A673 (cell line): ENCODE measurements at regions of chr4 and their contacts with region 1.

Region 1: GRCh38 chr4:22045051-22045630 is 96.6 kb upstream of the KCNIP4 start:
- DNase-seq: no peak
- H3K4me3 ChIP-seq: no peak overlapping the region
- H3K27ac ChIP-seq: no peak overlapping the region
- H3K4me1 ChIP-seq: no peaks in the 10 kb centered on the region
- H3K27me3 ChIP-seq: no peaks in the 10 kb centered on the region
- CTCF ChIP-seq: no peak

Region 2: DNA sequence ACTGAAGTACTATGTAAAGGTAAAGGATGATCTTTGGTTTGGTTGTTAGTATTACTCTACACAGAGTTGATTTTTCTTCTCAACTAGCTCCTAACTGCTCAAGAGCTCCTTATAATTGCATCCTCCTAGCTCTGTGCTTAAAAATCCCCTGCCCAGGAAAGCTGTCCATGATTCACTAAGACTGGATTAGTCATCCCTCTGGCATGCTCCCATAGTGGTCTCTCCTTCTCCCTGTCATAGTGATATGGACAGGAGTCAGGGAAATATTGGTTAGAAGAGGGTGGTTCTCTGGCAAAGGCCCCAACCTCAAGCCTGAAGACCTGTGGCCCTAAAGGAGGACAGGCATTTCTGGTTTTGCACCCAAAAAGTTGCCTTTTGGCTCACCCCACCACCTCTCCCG is 145.7 kb after region 1 on chr4:
- CTCF ChIA-PET with region 1: no interaction called
- POLR2A ChIA-PET with region 1: no interaction called
- intact Hi-C with region 1: no loop called
- DNase-seq: peak; percentile 4
- H3K4me3 ChIP-seq: no peak overlapping the region
- H3K27ac ChIP-seq: no peak overlapping the region
- H3K4me1 ChIP-seq: no peaks in the 10 kb centered on the region
- H3K27me3 ChIP-seq: no peaks in the 10 kb centered on the region
- CTCF ChIP-seq: no peak

Region 3: GRCh38 chr4:22635692-22636091 is 590.6 kb after region 1 on chr4:
- CTCF ChIA-PET with region 1: interaction called, 18 read pairs
- POLR2A ChIA-PET with region 1: no interaction called
- intact Hi-C with region 1: no loop called
- DNase-seq: no peak
- H3K4me3 ChIP-seq: no peak overlapping the region
- H3K27ac ChIP-seq: no peak overlapping the region
- H3K4me1 ChIP-seq: no peaks in the 10 kb centered on the region
- H3K27me3 ChIP-seq: no peaks in the 10 kb centered on the region
- CTCF ChIP-seq: no peak